Tibial artery (tissue), 4 donors: ENCODE measurements at regions of chr18 and their contacts with region 1.

Region 1: DNA sequence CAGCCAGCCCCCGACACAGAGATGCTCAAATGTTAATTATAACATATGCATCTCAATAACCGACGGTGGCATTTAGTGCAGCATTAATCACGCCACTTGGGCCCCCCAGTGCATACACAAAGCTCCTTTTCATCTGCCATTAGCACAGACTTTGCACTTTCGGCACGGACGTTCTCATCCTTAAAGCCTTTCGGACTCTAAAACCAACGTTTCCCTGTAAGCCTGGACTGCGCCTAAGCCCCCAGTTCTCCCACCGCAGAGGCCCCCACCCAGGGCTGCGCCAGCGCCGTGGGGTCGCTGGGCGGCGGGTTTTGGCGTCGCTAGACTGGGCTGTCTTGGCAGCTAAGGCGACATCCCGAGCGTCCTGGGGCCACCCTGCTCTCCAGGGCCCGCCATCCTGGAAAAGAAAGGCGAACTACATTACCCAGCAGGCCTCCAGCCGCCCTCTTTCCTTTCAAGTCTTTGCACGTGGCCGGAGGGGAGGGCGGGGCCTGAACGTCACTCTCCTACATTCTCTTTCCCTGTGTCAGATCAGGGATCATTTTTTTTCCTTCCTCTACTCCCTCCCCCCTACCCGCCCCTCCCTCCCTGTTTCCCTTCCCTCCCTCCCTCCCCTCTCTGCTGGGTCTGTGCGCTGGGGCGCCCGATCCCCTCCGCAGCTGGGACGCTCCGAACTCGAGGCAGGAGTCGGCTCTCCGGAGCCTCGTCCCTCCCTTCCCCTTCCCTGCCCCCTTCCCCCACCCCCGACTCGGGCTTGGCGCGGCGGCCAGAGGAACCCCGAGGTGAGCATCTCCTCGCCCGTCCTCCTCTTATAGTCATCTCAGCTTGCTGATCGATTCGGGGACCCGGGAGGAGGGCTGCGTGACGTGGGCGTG is at the start of gene CTIF:
- DNase-seq: peak; percentile 99
- H3K4me3 ChIP-seq: peak within 1 kb of the TSS; percentile 90 to 97
- H3K27ac ChIP-seq: peak within 1 kb of the TSS; percentile 95 to 97
- H3K4me1 ChIP-seq: peaks cover 0 to 32% (median 14%) of the 10 kb centered on the region in 4 donors
- H3K27me3 ChIP-seq: no peaks in the 10 kb centered on the region
- CTCF ChIP-seq: peak in 1 of 2 experiments; percentile 4

Region 2: GRCh38 chr18:48613589-48614404 is 75.0 kb after region 1 on chr18:
- intact Hi-C with region 1: loop called (anchors 5 kb)
- DNase-seq: peak; percentile 88 to 92
- H3K4me3 ChIP-seq: peak overlapping the region in 1 of 2 donors; percentile 19
- H3K27ac ChIP-seq: peak overlapping the region; percentile 80 to 83
- H3K4me1 ChIP-seq: peaks cover 0 to 83% (median 73%) of the 10 kb centered on the region in 4 donors
- H3K27me3 ChIP-seq: no peaks in the 10 kb centered on the region
- CTCF ChIP-seq: no peak

Region 3: GRCh38 chr18:48851599-48851960 is 312.8 kb after region 1 on chr18:
- intact Hi-C with region 1: no loop called
- DNase-seq: peak; percentile 59 to 85
- H3K4me3 ChIP-seq: no peak overlapping the region
- H3K27ac ChIP-seq: peak overlapping the region; percentile 76 to 80
- H3K4me1 ChIP-seq: peaks cover 0 to 74% (median 43%) of the 10 kb centered on the region in 4 donors
- H3K27me3 ChIP-seq: no peaks in the 10 kb centered on the region
- CTCF ChIP-seq: no peak